ENCODE measurements at regions of chr2 and their contacts with region 1.

Region 1: DNA sequence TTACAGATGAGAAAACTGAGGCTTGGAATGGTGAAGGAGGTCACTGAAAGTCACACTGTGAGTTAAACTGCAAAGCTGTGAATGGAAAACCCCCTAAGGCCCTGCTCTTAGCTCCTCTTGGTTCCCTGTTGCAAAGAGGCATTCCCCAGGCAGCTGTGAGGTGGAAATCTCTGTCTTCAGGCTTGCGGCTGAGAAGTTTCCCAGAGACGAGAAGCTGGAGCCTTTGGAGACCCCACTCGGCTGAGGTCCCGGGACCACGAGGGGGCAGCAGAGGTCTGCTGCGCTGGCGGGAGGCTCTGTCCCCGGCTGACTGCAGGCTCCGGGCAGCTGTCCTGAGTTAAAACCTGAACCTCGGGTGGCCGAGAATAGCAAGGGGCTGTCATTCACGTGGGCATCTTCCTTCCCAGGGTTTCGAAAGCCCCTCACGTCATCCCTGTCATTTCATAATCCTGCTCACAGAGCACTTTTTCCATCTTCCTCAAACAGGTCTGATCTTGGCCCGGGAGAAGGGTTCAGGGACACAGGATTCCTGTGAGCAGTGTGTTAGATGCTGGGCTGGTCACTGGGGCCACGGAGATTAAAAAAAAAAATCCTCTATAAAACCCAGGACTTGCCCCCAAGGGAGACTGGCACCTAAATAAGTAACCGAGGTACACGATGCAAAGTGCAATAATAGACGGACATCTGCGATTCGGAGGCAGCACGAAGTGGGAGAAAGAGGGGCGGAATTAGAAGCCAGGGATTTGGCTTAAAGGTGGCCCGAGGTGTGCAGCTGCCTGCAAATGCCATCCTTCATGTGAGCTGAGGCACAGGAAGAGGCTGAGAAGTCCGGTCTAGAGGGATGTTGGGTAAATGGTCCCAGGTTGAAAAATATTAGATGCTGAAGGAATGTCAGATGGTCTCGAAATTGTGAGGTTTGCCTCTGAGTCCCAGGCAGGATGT is 24.6 kb upstream of the ATOH8 start:
- DNase-seq: peak; percentile 48 to 82 (median 73)
- ATAC-seq: peak; percentile 84
- H3K4me3 ChIP-seq: no peak overlapping the region
- H3K4me3 Mint-ChIP-seq: no peak overlapping the region
- H3K27ac ChIP-seq: no peak overlapping the region
- H3K27ac Mint-ChIP-seq: no peak overlapping the region
- H3K4me1 ChIP-seq: peaks cover 5% of the 10 kb centered on the region
- H3K4me1 Mint-ChIP-seq: peaks cover 2% of the 10 kb centered on the region
- H3K27me3 ChIP-seq: peaks cover 0 to 2% of the 10 kb centered on the region in 2 experiments
- H3K27me3 Mint-ChIP-seq: no peaks in the 10 kb centered on the region
- CTCF ChIP-seq: peak; percentile 78

Region 2: GRCh38 chr2:85718009-85718391 is 11.2 kb before region 1 on chr2:
- CTCF ChIA-PET with region 1: interaction called, 24 read pairs
- POLR2A ChIA-PET with region 1: no interaction called
- intact Hi-C with region 1: no loop called
- DNase-seq: no peak
- ATAC-seq: no peak
- H3K4me3 ChIP-seq: no peak overlapping the region
- H3K4me3 Mint-ChIP-seq: no peak overlapping the region
- H3K27ac ChIP-seq: no peak overlapping the region
- H3K27ac Mint-ChIP-seq: no peak overlapping the region
- H3K4me1 ChIP-seq: no peaks in the 10 kb centered on the region
- H3K4me1 Mint-ChIP-seq: peaks cover 5% of the 10 kb centered on the region
- H3K27me3 ChIP-seq: no peaks in the 10 kb centered on the region
- H3K27me3 Mint-ChIP-seq: no peaks in the 10 kb centered on the region
- CTCF ChIP-seq: no peak

Region 3: DNA sequence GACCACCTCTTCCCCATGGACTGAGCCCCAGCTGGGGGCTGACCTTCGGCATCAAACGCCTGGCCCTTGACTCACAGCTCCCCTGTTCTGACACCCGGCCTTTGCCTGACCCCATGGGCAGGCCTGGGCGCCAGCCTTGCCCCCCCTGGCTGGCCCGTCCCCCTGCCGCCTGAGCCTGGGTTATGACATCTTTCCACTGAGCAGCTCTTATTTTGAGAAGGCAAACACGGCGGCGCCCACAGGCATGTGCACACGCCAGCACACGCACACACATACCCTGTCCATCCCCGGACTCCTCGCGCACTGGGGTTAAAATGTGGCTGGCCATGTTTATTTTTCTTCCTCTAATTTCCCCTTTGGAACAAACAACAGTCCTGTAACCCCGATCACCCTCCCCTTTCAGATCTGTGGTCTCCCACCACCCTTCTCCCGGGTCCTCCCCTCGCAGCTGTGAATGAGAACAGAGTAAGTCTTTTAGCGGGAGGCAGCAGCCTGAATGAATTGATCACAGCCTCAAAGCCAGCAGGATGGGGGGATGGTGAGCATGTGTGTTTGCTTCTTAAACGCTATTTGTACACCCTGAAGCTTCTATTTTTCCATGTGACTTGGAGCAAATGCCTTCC is 12.8 kb after region 1 on chr2:
- CTCF ChIA-PET with region 1: interaction called, 13 read pairs
- POLR2A ChIA-PET with region 1: no interaction called
- intact Hi-C with region 1: no loop called
- DNase-seq: no peak
- ATAC-seq: no peak
- H3K4me3 ChIP-seq: no peak overlapping the region
- H3K4me3 Mint-ChIP-seq: no peak overlapping the region
- H3K27ac ChIP-seq: no peak overlapping the region
- H3K27ac Mint-ChIP-seq: no peak overlapping the region
- H3K4me1 ChIP-seq: no peaks in the 10 kb centered on the region
- H3K4me1 Mint-ChIP-seq: no peaks in the 10 kb centered on the region
- H3K27me3 ChIP-seq: no peaks in the 10 kb centered on the region
- H3K27me3 Mint-ChIP-seq: peaks cover 32% of the 10 kb centered on the region
- CTCF ChIP-seq: no peak

Region 4: DNA sequence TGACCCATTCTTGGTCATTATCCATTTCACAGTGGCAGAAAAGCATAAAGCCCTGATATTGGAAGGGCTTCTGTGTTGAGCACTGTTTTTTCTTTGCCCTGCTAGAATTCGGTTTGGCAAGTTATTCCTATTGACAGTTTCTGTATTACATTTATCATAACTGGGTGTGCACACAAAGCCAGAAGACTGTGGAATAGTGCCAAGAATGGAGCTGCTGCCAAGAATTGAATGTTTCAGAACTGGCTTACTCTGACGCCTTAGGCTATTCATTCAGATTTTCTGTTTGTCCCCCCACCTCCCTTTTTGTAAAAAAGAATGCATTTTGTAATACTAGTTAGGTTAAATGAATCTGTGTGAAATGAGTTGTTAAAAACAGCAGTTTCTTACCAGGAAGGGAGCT is 724.7 kb after region 1 on chr2:
- CTCF ChIA-PET with region 1: no interaction called
- POLR2A ChIA-PET with region 1: no interaction called
- intact Hi-C with region 1: no loop called
- DNase-seq: no peak
- ATAC-seq: no peak
- H3K4me3 ChIP-seq: no peak overlapping the region
- H3K4me3 Mint-ChIP-seq: no peak overlapping the region
- H3K27ac ChIP-seq: no peak overlapping the region
- H3K27ac Mint-ChIP-seq: no peak overlapping the region
- H3K4me1 ChIP-seq: peaks cover 8% of the 10 kb centered on the region
- H3K4me1 Mint-ChIP-seq: peaks cover 42% of the 10 kb centered on the region
- H3K27me3 ChIP-seq: no peaks in the 10 kb centered on the region
- H3K27me3 Mint-ChIP-seq: no peaks in the 10 kb centered on the region
- CTCF ChIP-seq: no peak